AG04450 (cell line): ENCODE measurements at regions of chr1 and their contacts with region 1.

Region 1: GRCh38 chr1:62131093-62131725 is 63.4 kb upstream of the L1TD1 start:
- DNase-seq: peak; percentile 46
- H3K4me3 ChIP-seq: no peak overlapping the region
- H3K27ac ChIP-seq: no peak overlapping the region
- H3K27me3 ChIP-seq: no peaks in the 10 kb centered on the region
- CTCF ChIP-seq: peak; percentile 99

Region 2: GRCh38 chr1:62117018-62117750 is 14.0 kb before region 1 on chr1:
- CTCF ChIA-PET with region 1: interaction called, 27 read pairs
- POLR2A ChIA-PET with region 1: no interaction called
- DNase-seq: no peak
- H3K4me3 ChIP-seq: no peak overlapping the region
- H3K27ac ChIP-seq: no peak overlapping the region
- H3K27me3 ChIP-seq: no peaks in the 10 kb centered on the region
- CTCF ChIP-seq: no peak

Region 3: DNA sequence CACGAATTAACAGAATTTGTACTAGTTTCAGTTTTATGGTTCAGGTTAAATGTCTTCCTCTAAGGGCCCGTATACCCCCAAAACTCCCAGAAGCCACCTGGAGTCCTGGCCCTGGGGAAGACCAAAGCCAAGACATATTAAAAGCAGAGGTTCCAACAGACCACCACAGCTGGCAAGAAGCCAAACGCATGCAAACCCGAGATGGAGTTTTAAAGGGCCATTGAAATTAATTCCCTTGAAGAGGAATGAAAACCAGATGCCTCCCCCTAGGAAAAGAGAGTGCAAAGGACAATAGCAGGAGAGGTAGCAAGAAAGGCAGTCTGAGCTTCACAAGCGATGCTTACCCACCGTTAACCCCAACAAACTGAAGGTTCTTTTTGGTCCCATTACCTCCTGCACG is 139.9 kb after region 1 on chr1:
- CTCF ChIA-PET with region 1: no interaction called
- POLR2A ChIA-PET with region 1: interaction called, 10 read pairs
- DNase-seq: no peak
- H3K4me3 ChIP-seq: no peak overlapping the region
- H3K27ac ChIP-seq: no peak overlapping the region
- H3K27me3 ChIP-seq: no peaks in the 10 kb centered on the region
- CTCF ChIP-seq: no peak